ENCODE measurements at regions of chr11 and their contacts with region 1.

Region 1: GRCh38 chr11:86068951-86069407 is at the start of gene PICALM:
- DNase-seq: peak; percentile 99
- H3K4me3 ChIP-seq: peak within 1 kb of the TSS; percentile 74 to 90 (median 77)
- H3K27ac ChIP-seq: peak within 1 kb of the TSS; percentile 100
- H3K4me1 ChIP-seq: peaks cover 23% of the 10 kb centered on the region
- H3K27me3 ChIP-seq: no peaks in the 10 kb centered on the region
- CTCF ChIP-seq: no peak
- total RNA-seq, gene PICALM: 179 to 329 TPM

Region 2: DNA sequence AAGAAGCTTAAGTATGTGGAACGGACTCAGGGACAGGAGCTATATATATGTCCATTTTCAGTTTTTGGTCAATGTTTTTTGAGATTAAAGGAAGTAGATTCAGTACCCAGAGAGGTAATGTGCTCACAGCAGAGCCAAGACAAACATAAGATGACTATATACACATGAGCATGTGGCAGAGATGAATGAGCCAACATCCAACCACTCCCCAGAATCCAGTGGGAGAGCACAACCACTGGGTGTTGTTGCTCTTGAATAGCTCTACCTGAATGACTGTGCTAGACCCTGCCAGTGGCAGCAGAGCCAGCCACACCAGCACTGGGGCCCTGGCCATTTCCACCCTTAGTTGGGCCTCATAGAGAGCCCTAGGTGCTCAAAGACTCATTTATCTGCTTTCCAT is 247.3 kb before region 1 on chr11:
- CTCF ChIA-PET with region 1: no interaction called
- dilution Hi-C with region 1: no loop called
- in situ Hi-C with region 1: no loop called
- intact Hi-C with region 1: no loop called
- DNase-seq: peak; percentile 80
- H3K4me3 ChIP-seq: no peak overlapping the region
- H3K27ac ChIP-seq: no peak overlapping the region
- H3K4me1 ChIP-seq: peaks cover 15% of the 10 kb centered on the region
- H3K27me3 ChIP-seq: no peaks in the 10 kb centered on the region
- CTCF ChIP-seq: no peak

Region 3: DNA sequence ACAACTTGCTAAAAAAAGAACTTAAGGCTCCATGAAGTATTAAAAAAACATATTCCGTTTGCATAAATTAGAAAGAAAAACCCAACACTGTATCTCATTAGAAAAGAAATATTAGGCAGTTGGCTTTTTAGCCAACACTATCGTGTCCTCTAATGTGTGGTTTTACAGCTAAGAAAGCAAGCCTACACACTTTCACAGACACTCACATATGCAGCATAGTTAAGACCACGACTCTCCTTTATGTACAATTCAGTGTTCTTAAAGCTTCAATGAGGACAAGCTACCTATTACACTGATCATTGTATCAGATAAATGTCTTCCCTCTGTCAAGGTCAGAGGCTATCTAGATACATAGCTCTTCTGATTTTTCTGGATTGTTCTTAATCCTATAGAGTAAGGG is 80.2 kb before region 1 on chr11:
- CTCF ChIA-PET with region 1: no interaction called
- dilution Hi-C with region 1: loop called (anchors 5 kb)
- in situ Hi-C with region 1: no loop called
- intact Hi-C with region 1: no loop called
- DNase-seq: no peak
- H3K4me3 ChIP-seq: no peak overlapping the region
- H3K27ac ChIP-seq: no peak overlapping the region
- H3K4me1 ChIP-seq: no peaks in the 10 kb centered on the region
- H3K27me3 ChIP-seq: no peaks in the 10 kb centered on the region
- CTCF ChIP-seq: no peak

Region 4: DNA sequence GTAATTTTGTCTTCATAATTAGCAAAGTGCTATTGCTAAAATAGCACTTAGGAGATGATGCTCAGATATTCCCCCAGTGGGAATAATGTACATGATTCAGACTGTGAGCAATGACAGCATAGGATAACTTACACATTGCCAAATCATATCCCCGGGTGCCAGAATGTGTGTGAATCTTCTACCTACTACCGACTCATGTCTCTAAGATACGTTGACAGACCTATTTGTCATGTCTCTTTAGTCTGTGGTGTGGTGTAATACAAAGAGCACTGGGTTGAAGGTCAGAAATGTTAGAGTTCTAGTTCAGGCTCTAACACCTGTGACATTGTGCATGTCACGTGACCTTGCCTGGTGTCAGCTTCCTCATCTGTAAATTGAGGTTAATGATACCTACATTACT is 30.9 kb after region 1 on chr11:
- CTCF ChIA-PET with region 1: no interaction called
- dilution Hi-C with region 1: no loop called
- in situ Hi-C with region 1: no loop called
- intact Hi-C with region 1: loop called (anchors 1 kb)
- DNase-seq: peak; percentile 86
- H3K4me3 ChIP-seq: no peak overlapping the region
- H3K27ac ChIP-seq: no peak overlapping the region
- H3K4me1 ChIP-seq: peaks cover 7% of the 10 kb centered on the region
- H3K27me3 ChIP-seq: no peaks in the 10 kb centered on the region
- CTCF ChIP-seq: no peak

Region 5: GRCh38 chr11:86151174-86152005 is 82.4 kb after region 1 on chr11:
- CTCF ChIA-PET with region 1: no interaction called
- dilution Hi-C with region 1: loop called (anchors 5 kb)
- in situ Hi-C with region 1: no loop called
- intact Hi-C with region 1: loop called (anchors 2 kb)
- DNase-seq: no peak
- H3K4me3 ChIP-seq: peak overlapping the region in 1 of 3 experiments; percentile 13
- H3K27ac ChIP-seq: peak overlapping the region; percentile 90
- H3K4me1 ChIP-seq: peaks cover 54% of the 10 kb centered on the region
- H3K27me3 ChIP-seq: no peaks in the 10 kb centered on the region
- CTCF ChIP-seq: no peak

Region 6: DNA sequence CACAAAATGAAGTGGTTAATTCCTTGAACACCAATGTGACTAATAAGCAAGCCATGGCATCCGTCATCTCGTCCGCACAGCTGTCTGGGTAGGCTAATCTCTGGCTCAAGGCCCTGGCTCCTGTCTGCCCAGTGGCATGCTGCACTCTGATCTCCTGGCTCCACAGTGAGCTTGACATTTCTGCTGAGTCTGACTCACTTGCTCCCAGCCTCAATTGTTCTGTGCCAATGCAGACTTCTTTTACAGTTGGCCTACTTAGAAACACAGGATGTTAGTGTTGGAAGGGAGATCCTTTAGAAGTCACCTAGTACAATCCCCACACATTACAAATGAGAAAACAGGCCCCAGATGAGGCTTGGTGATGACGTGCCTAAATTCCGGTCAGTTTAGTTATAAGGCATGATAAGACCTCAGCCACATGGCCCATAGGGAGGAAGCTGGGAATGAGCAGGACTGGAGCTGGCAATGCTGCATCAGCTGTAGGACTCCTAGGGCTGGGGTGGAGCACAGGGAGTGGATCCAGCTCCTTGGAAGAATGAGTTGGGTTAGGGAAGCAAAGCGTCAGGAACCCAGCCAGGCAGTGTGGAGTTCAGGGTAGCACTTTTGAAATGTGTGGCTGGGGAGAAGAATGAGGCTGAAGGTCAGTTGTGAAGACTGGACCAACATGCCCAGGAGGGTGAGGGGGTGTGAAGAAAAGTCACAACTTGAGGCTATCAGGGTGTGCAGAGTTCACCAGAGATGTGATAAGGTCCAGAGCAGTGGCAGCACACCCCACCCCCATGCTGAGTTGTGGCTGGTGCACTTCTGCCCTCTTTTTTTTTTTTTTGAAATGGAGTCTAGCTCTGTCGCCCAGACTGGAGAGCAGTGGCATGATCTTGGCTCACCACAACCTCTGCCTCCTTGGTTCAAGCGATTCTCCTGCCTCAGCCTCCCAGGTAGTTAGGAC is 105.4 kb after region 1 on chr11:
- CTCF ChIA-PET with region 1: no interaction called
- dilution Hi-C with region 1: no loop called
- in situ Hi-C with region 1: loop called in 1 of 2 experiments (anchors 5 kb)
- intact Hi-C with region 1: no loop called
- DNase-seq: peak; percentile 97
- H3K4me3 ChIP-seq: no peak overlapping the region
- H3K27ac ChIP-seq: peak overlapping the region; percentile 86
- H3K4me1 ChIP-seq: peaks cover 36% of the 10 kb centered on the region
- H3K27me3 ChIP-seq: no peaks in the 10 kb centered on the region
- CTCF ChIP-seq: no peak

Region 7: DNA sequence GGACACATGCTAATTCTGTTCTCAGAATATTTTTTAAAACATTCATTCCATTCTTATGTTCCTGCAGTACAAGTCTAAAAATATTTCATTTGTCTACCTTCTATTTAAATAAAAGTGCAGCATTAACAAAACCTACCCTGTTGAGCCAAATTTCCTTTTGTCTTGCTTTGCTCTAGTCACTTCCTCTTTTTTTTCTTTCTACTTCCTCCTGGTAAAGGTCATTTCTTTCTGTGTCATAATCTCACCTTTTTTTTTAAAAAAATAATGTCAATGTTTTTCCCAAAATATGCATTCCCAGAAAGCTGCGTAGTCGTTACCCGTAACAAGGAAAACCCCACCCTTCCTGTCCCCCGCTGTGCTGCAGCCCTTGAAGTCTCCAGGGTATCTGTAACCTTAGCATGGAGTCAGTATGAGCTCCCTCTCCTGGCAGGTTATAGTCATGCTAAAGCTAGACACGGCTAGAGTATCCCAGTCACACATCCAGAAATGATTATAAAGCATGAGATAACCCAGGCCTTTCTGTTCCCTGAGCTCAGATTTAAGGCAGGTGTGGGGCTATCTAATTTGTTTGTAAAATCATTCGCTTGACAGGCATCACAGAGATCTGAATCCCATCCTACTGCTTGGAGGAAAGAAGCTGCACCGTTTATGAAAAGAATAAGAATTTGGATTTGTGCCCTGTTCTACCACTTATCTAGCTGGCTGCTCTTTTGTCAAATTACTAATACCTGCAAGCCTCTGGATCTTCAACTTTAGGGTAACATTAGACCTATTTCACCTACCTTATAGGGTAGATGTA is 124.5 kb after region 1 on chr11:
- CTCF ChIA-PET with region 1: interaction called, 6 read pairs
- dilution Hi-C with region 1: no loop called
- in situ Hi-C with region 1: no loop called
- intact Hi-C with region 1: loop called (anchors 1 kb)
- DNase-seq: peak; percentile 69
- H3K4me3 ChIP-seq: peak overlapping the region in 2 of 3 experiments; percentile 14 to 18
- H3K27ac ChIP-seq: peak overlapping the region; percentile 5
- H3K4me1 ChIP-seq: peaks cover 7% of the 10 kb centered on the region
- H3K27me3 ChIP-seq: no peaks in the 10 kb centered on the region
- CTCF ChIP-seq: peak; percentile 82 to 89

Measured in mammary epithelial cell (primary cell).